Aorta (tissue), 5 donors: ENCODE measurements at regions of chr11 and their contacts with region 1.

Region 1: DNA sequence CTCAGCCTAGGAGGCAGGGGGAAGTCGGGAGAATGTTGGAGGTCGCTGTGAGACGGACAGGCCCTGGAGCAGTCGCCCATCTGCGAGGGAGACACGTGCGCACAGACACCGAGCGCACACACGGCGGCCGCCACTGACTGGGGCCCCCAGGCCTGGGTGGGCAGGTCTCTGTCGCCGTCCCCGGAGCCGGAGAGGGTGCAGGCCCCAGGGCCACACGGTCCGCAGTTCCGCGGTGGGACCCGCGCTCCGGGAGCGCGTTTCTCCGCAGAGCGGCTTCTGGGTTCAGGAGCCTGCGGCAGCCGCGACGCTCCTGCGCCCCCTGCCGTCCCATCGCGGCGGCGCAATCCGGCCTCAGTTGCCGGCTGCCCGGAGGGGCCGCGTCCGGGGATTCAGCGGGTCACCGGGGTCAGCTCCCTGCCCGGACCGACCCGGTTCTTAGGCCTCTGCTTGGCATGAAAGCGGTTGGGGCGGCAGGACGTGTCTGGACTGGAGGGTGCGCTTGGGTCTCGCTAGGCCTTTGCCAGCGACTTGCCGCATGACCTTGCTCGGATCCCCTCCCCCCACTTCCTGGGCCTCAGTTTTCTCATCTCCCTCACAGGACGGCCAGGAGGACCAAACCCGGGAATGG is 31.2 kb downstream of the PDE2A start:
- DNase-seq: peak; percentile 71 to 90
- ATAC-seq: peak; percentile 83
- H3K4me3 ChIP-seq: peak overlapping the region; percentile 12 to 15
- H3K27ac ChIP-seq: no peak overlapping the region
- H3K4me1 ChIP-seq: no peaks in the 10 kb centered on the region
- H3K27me3 ChIP-seq: no peaks in the 10 kb centered on the region

Region 2: GRCh38 chr11:72585762-72586311 is 57.2 kb before region 1 on chr11:
- intact Hi-C with region 1: loop called (anchors 2 kb)
- DNase-seq: peak; percentile 66 to 78
- ATAC-seq: peak; percentile 76
- H3K4me3 ChIP-seq: no peak overlapping the region
- H3K27ac ChIP-seq: no peak overlapping the region
- H3K4me1 ChIP-seq: no peaks in the 10 kb centered on the region
- H3K27me3 ChIP-seq: no peaks in the 10 kb centered on the region

Region 3: DNA sequence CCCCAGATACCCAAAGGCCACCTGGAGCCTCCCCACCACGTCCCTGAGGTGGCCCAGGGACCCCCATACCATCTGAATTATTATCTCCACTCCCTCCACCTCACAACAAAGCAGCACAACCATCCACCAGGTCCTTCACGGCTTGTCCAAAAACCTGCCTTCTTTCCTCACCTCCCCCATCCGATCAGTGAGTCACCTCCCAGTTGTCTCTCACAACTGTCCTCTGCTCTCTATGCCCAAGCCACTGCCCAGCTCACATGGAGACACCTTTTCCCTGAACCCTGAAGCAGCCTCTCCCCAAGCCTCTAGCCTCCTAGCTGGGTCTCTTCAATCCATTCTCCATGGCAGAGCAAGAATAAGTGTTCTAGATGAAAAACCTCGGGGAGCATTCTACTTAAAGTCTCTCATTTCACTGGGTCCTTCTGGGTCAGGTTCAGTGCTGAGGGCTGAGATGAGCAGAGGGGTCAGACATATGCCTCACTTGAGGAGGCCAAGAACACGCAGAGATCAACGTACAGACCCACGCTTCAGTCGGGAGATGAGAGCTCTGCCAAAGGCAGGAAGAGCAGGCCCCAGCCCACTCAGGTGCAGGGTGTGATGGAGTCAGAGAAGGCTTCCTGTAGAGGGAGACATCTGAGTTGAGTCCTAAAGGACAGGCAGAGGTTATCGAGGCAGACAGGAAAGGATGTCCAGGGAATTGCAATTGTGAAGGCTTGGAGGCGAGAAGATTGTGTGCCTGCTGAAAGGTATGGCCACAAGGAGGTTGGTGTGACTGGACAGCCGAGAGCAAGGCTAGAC is 43.5 kb before region 1 on chr11:
- intact Hi-C with region 1: loop called in 1 of 2 experiments (anchors 5 kb)
- DNase-seq: no peak
- ATAC-seq: no peak
- H3K4me3 ChIP-seq: no peak overlapping the region
- H3K27ac ChIP-seq: no peak overlapping the region
- H3K4me1 ChIP-seq: no peaks in the 10 kb centered on the region
- H3K27me3 ChIP-seq: no peaks in the 10 kb centered on the region